Psoas muscle (tissue), 8 donors: ENCODE measurements at regions of chr5 and their contacts with region 1.

Region 1: GRCh38 chr5:172984243-172984953 is 827 bp downstream of the ATP6V0E1 start:
- DNase-seq: peak; percentile 82 to 89
- ATAC-seq: peak; percentile 76 to 89 (median 82)
- H3K4me3 ChIP-seq: peak overlapping the region; percentile 83
- H3K27ac ChIP-seq: peak overlapping the region; percentile 98
- H3K4me1 ChIP-seq: peaks cover 15% of the 10 kb centered on the region
- H3K27me3 ChIP-seq: no peaks in the 10 kb centered on the region
- CTCF ChIP-seq: peak; percentile 45

Region 2: GRCh38 chr5:173057062-173057924 is 72.9 kb after region 1 on chr5:
- intact Hi-C with region 1: loop called (anchors 5 to 10 kb)
- DNase-seq: peak; percentile 99
- ATAC-seq: peak; percentile 94 to 96 (median 95)
- H3K4me3 ChIP-seq: peak overlapping the region; percentile 100
- H3K27ac ChIP-seq: peak overlapping the region; percentile 100
- H3K4me1 ChIP-seq: peaks cover 29% of the 10 kb centered on the region
- H3K27me3 ChIP-seq: no peaks in the 10 kb centered on the region
- CTCF ChIP-seq: no peak

Region 3: GRCh38 chr5:173144200-173145176 is 160.1 kb after region 1 on chr5 and contains the start of gene BNIP1:
- intact Hi-C with region 1: loop called (anchors 5 to 10 kb)
- DNase-seq: peak; percentile 96 to 98
- ATAC-seq: peak; percentile 96 to 97 (median 97)
- H3K4me3 ChIP-seq: peak within 1 kb of the TSS; percentile 87
- H3K27ac ChIP-seq: peak within 1 kb of the TSS; percentile 87
- H3K4me1 ChIP-seq: no peaks in the 10 kb centered on the region
- H3K27me3 ChIP-seq: no peaks in the 10 kb centered on the region
- CTCF ChIP-seq: peak; percentile 91
- total RNA-seq, gene BNIP1: 8.4 to 15.1 (median 11.5) TPM

Region 4: GRCh38 chr5:173204185-173204979 is 220.0 kb after region 1 on chr5:
- intact Hi-C with region 1: loop called in 1 of 2 experiments (anchors 5 kb)
- DNase-seq: no peak
- ATAC-seq: no peak
- H3K4me3 ChIP-seq: no peak overlapping the region
- H3K27ac ChIP-seq: no peak overlapping the region
- H3K4me1 ChIP-seq: no peaks in the 10 kb centered on the region
- H3K27me3 ChIP-seq: peaks cover 0 to 42% (median 6%) of the 10 kb centered on the region in 3 donors
- CTCF ChIP-seq: peak; percentile 32

Region 5: DNA sequence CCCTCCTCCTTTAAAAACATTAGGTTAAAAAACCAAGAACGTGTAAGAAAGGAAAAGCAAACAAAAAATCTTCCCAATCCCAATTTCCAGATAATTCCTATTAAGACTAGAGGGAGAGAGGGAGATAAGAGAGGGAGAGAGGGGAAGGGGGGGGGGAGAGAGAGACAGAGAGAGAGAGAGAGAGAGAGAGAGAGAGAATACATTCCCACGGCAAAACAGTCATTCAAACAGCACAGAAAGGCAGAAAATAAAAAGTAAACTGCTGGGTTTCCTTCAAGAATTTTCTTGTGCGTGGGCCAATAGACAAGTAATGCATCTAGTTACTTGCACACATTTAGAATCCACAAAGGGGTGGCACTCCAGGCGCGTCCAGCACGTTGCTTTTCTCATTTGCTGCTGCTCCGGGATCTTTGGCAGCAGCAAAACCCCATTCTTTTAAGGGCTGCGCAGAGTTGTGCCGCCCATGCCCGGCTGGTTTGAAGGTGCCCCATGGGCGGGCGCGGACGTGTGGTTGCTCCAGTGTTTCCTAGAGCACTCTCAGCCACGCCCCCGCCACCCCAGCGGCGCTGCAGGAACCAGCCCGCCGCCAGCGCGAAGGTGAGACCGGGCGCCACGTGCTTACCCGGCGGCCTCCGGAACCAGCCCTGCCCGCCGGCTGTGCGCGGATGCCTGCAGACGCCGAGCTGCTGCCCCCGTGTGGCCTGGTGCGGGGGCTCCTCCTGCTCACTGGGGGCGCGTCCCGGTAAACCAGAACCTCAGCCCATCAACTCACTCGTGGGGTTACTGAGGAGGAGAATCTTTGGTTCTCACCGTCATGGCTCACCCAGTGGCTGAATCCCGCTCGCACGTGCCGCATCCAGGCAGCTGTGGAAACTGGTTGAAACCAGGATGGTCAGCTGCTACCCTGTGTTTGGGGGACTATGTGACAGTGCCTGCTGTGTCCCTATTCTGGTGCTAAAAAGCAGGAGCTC is 299.2 kb after region 1 on chr5:
- intact Hi-C with region 1: loop called (anchors 5 kb)
- DNase-seq: peak; percentile 78 to 80
- ATAC-seq: peak; percentile 91 to 99 (median 96)
- H3K4me3 ChIP-seq: peak overlapping the region; percentile 43
- H3K27ac ChIP-seq: no peak overlapping the region
- H3K4me1 ChIP-seq: no peaks in the 10 kb centered on the region
- H3K27me3 ChIP-seq: peaks cover 3 to 64% (median 4%) of the 10 kb centered on the region in 3 donors
- CTCF ChIP-seq: peak; percentile 66